ENCODE measurements at regions of chr3 and their contacts with region 1.

Region 1: GRCh38 chr3:113136071-113136470 is 75.3 kb upstream of the BOC start:
- DNase-seq: peak; percentile 53
- H3K4me3 Mint-ChIP-seq: no peak overlapping the region
- H3K27ac Mint-ChIP-seq: no peak overlapping the region
- H3K4me1 Mint-ChIP-seq: no peaks in the 10 kb centered on the region
- H3K27me3 Mint-ChIP-seq: no peaks in the 10 kb centered on the region
- CTCF ChIP-seq: peak; percentile 32

Region 2: GRCh38 chr3:113124256-113124830 is 11.7 kb before region 1 on chr3:
- CTCF ChIA-PET with region 1: interaction called, 13 read pairs
- POLR2A ChIA-PET with region 1: no interaction called
- intact Hi-C with region 1: no loop called
- DNase-seq: no peak
- H3K4me3 Mint-ChIP-seq: no peak overlapping the region
- H3K27ac Mint-ChIP-seq: no peak overlapping the region
- H3K4me1 Mint-ChIP-seq: no peaks in the 10 kb centered on the region
- H3K27me3 Mint-ChIP-seq: no peaks in the 10 kb centered on the region
- CTCF ChIP-seq: no peak

Region 3: GRCh38 chr3:113225286-113225685 is 89.2 kb after region 1 on chr3:
- CTCF ChIA-PET with region 1: no interaction called
- POLR2A ChIA-PET with region 1: no interaction called
- intact Hi-C with region 1: no loop called
- DNase-seq: no peak
- H3K4me3 Mint-ChIP-seq: no peak overlapping the region
- H3K27ac Mint-ChIP-seq: no peak overlapping the region
- H3K4me1 Mint-ChIP-seq: no peaks in the 10 kb centered on the region
- H3K27me3 Mint-ChIP-seq: no peaks in the 10 kb centered on the region
- CTCF ChIP-seq: no peak

Region 4: DNA sequence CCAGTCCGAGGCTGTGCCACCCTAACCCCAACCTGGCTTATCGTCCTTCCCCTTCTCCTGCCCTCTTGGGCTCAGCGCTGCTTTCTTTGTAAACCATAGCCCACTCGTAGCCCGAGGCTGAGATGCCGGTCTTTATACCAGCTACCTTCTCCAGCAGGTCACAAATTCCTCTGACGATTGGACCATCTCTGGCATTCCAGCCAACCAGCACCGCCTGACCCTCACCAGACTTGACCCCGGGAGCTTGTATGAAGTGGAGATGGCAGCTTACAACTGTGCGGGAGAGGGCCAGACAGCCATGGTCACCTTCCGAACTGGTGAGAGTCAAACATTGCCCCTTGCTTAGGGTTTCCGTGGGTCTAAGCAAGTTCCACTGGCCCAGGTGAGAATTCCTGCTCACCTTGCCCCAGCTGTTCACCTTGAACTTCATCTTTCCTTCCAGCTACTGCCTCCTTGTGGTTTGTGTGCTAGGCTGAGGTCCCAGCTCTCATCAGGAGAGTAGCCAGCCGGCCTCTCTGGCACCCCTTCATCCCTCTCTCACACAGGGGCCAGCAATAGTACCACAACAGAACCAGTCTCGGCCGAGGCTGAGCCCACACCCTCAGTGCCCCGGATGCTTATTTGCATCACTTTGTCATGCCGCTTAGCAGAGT is 142.0 kb after region 1 on chr3:
- CTCF ChIA-PET with region 1: interaction called, 11 read pairs
- POLR2A ChIA-PET with region 1: no interaction called
- intact Hi-C with region 1: no loop called
- DNase-seq: no peak
- H3K4me3 Mint-ChIP-seq: no peak overlapping the region
- H3K27ac Mint-ChIP-seq: no peak overlapping the region
- H3K4me1 Mint-ChIP-seq: no peaks in the 10 kb centered on the region
- H3K27me3 Mint-ChIP-seq: no peaks in the 10 kb centered on the region
- CTCF ChIP-seq: no peak

Measured in MCF 10A (cell line).